Caco-2 (cell line): ENCODE measurements at regions of chr13 and their contacts with region 1.

Region 1: DNA sequence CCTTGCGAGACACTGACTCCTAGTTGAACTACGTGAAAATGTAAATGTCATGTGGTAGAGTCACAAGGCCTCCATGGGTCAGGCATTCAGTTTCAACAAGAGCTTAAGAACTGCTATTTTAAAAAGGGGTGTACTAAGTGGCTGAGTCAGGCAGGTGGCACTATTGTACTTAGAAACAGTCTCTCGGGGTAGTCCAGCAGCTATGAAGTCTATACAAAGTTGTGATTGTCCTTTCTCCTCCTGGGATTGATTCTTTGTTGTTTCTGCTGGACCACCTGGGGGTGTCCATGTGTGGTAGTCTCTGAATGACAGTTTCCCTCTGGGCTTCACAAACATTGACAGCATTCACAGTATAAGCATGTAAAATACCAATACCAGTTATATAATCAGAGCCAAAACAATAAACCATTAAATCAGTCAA is 33.0 kb downstream of the UGGT2 start:
- DNase-seq: peak; percentile 61 to 71
- H3K4me3 ChIP-seq: no peak overlapping the region
- H3K4me3 Mint-ChIP-seq: no peak overlapping the region
- H3K27ac Mint-ChIP-seq: peak overlapping the region; percentile 25
- H3K4me1 ChIP-seq: peaks cover 9% of the 10 kb centered on the region
- H3K4me1 Mint-ChIP-seq: peaks cover 11% of the 10 kb centered on the region
- H3K27me3 ChIP-seq: no peaks in the 10 kb centered on the region
- H3K27me3 Mint-ChIP-seq: no peaks in the 10 kb centered on the region
- CTCF ChIP-seq: peak; percentile 72 to 82

Region 2: GRCh38 chr13:95842898-95843297 is 177.3 kb before region 1 on chr13:
- CTCF ChIA-PET with region 1: no interaction called
- POLR2A ChIA-PET with region 1: no interaction called
- intact Hi-C with region 1: no loop called
- DNase-seq: no peak
- H3K4me3 ChIP-seq: no peak overlapping the region
- H3K4me3 Mint-ChIP-seq: no peak overlapping the region
- H3K27ac Mint-ChIP-seq: no peak overlapping the region
- H3K4me1 ChIP-seq: no peaks in the 10 kb centered on the region
- H3K4me1 Mint-ChIP-seq: no peaks in the 10 kb centered on the region
- H3K27me3 ChIP-seq: no peaks in the 10 kb centered on the region
- H3K27me3 Mint-ChIP-seq: no peaks in the 10 kb centered on the region
- CTCF ChIP-seq: no peak

Region 3: GRCh38 chr13:96053011-96053703 is 33.0 kb after region 1 on chr13 and contains the start of gene UGGT2:
- CTCF ChIA-PET with region 1: interaction called, 33 read pairs
- POLR2A ChIA-PET with region 1: interaction called, 12 read pairs
- intact Hi-C with region 1: loop called (anchors 1 kb)
- DNase-seq: peak; percentile 96 to 97
- H3K4me3 ChIP-seq: peak within 1 kb of the TSS; percentile 100
- H3K4me3 Mint-ChIP-seq: peak within 1 kb of the TSS; percentile 87
- H3K27ac Mint-ChIP-seq: peak within 1 kb of the TSS; percentile 88
- H3K4me1 ChIP-seq: no peaks in the 10 kb centered on the region
- H3K4me1 Mint-ChIP-seq: no peaks in the 10 kb centered on the region
- H3K27me3 ChIP-seq: no peaks in the 10 kb centered on the region
- H3K27me3 Mint-ChIP-seq: peaks cover 2% of the 10 kb centered on the region
- CTCF ChIP-seq: no peak
- total RNA-seq, gene UGGT2: 35.5 and 42.0 TPM in 2 replicates

Region 4: DNA sequence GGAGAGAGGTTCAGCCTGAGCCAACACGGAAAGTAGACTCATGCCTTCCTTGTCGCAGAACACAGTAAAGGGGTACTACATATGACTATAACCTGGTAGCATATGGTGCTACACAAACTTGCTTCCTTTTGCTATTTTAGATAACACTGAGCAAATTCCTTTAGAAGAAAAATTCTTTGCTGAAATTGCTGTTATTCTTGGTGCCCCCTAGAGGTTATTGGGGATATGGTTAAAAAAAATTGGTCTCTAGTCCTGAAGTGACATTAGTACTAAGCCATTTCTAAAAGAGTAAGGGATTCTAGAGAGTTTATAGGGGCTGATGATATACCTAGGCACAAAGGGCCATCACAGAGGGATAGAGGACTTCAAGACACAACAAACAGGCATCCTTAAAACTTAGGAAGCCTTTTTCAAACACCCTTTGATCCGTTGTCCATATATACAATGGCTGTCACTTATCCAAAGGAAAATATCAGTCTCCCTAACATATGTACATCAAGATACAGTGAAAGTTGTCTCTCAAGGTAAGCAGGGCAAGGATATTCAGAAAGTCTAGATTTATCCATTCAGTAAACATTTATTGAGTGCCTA is 55.9 kb after region 1 on chr13:
- CTCF ChIA-PET with region 1: interaction called, 8 read pairs
- POLR2A ChIA-PET with region 1: no interaction called
- intact Hi-C with region 1: loop called (anchors 1 kb)
- DNase-seq: peak in 1 of 2 experiments; percentile 41
- H3K4me3 ChIP-seq: no peak overlapping the region
- H3K4me3 Mint-ChIP-seq: no peak overlapping the region
- H3K27ac Mint-ChIP-seq: no peak overlapping the region
- H3K4me1 ChIP-seq: no peaks in the 10 kb centered on the region
- H3K4me1 Mint-ChIP-seq: no peaks in the 10 kb centered on the region
- H3K27me3 ChIP-seq: no peaks in the 10 kb centered on the region
- H3K27me3 Mint-ChIP-seq: peaks cover 12% of the 10 kb centered on the region
- CTCF ChIP-seq: peak; percentile 48 to 63

Region 5: GRCh38 chr13:96141027-96141426 is 120.9 kb after region 1 on chr13:
- CTCF ChIA-PET with region 1: interaction called, 17 read pairs
- POLR2A ChIA-PET with region 1: no interaction called
- intact Hi-C with region 1: loop called (anchors 1 kb)
- DNase-seq: peak in 1 of 2 experiments; percentile 28
- H3K4me3 ChIP-seq: no peak overlapping the region
- H3K4me3 Mint-ChIP-seq: no peak overlapping the region
- H3K27ac Mint-ChIP-seq: no peak overlapping the region
- H3K4me1 ChIP-seq: no peaks in the 10 kb centered on the region
- H3K4me1 Mint-ChIP-seq: no peaks in the 10 kb centered on the region
- H3K27me3 ChIP-seq: no peaks in the 10 kb centered on the region
- H3K27me3 Mint-ChIP-seq: peaks cover 6% of the 10 kb centered on the region
- CTCF ChIP-seq: peak in 1 of 2 experiments; percentile 46

Region 6: GRCh38 chr13:96229356-96229755 is 209.2 kb after region 1 on chr13:
- CTCF ChIA-PET with region 1: interaction called, 70 read pairs
- POLR2A ChIA-PET with region 1: no interaction called
- intact Hi-C with region 1: loop called (anchors 1 kb)
- DNase-seq: peak in 1 of 2 experiments; percentile 44
- H3K4me3 ChIP-seq: no peak overlapping the region
- H3K4me3 Mint-ChIP-seq: no peak overlapping the region
- H3K27ac Mint-ChIP-seq: no peak overlapping the region
- H3K4me1 ChIP-seq: no peaks in the 10 kb centered on the region
- H3K4me1 Mint-ChIP-seq: no peaks in the 10 kb centered on the region
- H3K27me3 ChIP-seq: peaks cover 2% of the 10 kb centered on the region; the same call in 1 of the 2 replicates
- H3K27me3 Mint-ChIP-seq: no peaks in the 10 kb centered on the region
- CTCF ChIP-seq: peak; percentile 45 to 70

Region 7: DNA sequence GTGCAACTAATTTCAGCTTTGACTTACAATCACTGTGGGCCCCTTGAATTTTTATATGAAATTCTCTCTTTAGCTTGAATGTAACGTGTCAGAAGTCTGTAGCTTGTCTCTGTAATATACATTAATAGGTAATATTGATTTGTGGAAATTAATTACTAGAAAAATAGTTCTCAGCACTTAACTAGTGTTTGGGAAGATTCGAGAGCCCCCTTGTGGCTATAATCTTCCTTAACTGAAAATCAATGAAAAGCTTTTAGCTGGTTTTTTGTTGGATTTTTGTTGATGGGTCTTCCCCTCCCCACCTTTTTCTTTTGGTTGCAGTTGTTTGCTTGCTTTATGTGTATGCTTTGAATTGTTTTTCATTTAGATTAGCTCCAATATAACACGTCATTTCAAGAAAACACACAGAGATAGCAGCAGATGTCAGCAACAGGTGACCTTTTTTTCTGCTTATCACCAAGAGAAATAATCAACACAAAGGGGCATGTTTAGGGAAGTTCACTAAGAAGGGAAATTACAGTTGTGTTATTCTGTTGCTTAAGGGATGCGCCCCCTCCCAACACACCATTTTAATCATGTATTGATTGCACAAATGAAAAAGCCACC is 797.3 kb after region 1 on chr13:
- CTCF ChIA-PET with region 1: interaction called, 37 read pairs
- POLR2A ChIA-PET with region 1: no interaction called
- intact Hi-C with region 1: loop called (anchors 1 kb)
- DNase-seq: peak in 1 of 2 experiments; percentile 28
- H3K4me3 ChIP-seq: no peak overlapping the region
- H3K4me3 Mint-ChIP-seq: no peak overlapping the region
- H3K27ac Mint-ChIP-seq: no peak overlapping the region
- H3K4me1 ChIP-seq: no peaks in the 10 kb centered on the region
- H3K4me1 Mint-ChIP-seq: no peaks in the 10 kb centered on the region
- H3K27me3 ChIP-seq: no peaks in the 10 kb centered on the region
- H3K27me3 Mint-ChIP-seq: peaks cover under 1% of the 10 kb centered on the region
- CTCF ChIP-seq: peak; percentile 56 to 64

Region 8: GRCh38 chr13:96958286-96958891 is 938.2 kb after region 1 on chr13:
- CTCF ChIA-PET with region 1: interaction called, 8 read pairs
- POLR2A ChIA-PET with region 1: no interaction called
- intact Hi-C with region 1: loop called (anchors 2 kb)
- DNase-seq: peak in 1 of 2 experiments; percentile 44
- H3K4me3 ChIP-seq: no peak overlapping the region
- H3K4me3 Mint-ChIP-seq: no peak overlapping the region
- H3K27ac Mint-ChIP-seq: no peak overlapping the region
- H3K4me1 ChIP-seq: no peaks in the 10 kb centered on the region
- H3K4me1 Mint-ChIP-seq: no peaks in the 10 kb centered on the region
- H3K27me3 ChIP-seq: no peaks in the 10 kb centered on the region
- H3K27me3 Mint-ChIP-seq: peaks cover 6% of the 10 kb centered on the region
- CTCF ChIP-seq: peak; percentile 57 to 87